Heart left ventricle (tissue), 16 donors: ENCODE measurements at regions of chr18 and their contacts with region 1.

Region 1: DNA sequence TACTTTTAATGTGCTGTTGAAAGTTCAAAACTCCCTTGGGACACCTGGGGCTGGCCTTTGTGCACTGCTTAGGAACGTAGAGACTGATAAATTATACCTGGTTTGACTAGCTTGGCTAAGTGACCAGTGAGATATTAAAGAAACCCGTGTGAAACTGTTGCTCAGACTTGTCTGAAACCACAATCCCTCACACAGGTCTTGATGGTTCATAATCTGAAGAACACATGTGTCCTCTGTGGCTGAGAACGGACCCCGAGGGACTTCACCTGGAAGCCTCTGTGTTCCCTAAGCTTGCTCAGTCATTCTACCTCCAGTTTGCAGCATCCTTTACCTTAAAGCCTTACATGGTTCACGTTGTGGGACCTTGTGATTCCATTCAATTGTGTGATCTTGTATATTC is 218.8 kb downstream of the CBLN2 start:
- DNase-seq: no peak
- ATAC-seq: no peak
- H3K4me3 ChIP-seq: no peak overlapping the region
- H3K27ac ChIP-seq: no peak overlapping the region
- H3K4me1 ChIP-seq: no peaks in the 10 kb centered on the region
- H3K27me3 ChIP-seq: no peaks in the 10 kb centered on the region
- CTCF ChIP-seq: no peak
- POLR2A ChIP-seq: no peak

Region 2: GRCh38 chr18:72107647-72108383 is 217.5 kb before region 1 on chr18:
- intact Hi-C with region 1: no loop called
- DNase-seq: no peak
- ATAC-seq: no peak
- H3K4me3 ChIP-seq: no peak overlapping the region
- H3K27ac ChIP-seq: no peak overlapping the region
- H3K4me1 ChIP-seq: no peaks in the 10 kb centered on the region
- H3K27me3 ChIP-seq: no peaks in the 10 kb centered on the region
- CTCF ChIP-seq: no peak
- POLR2A ChIP-seq: no peak

Region 3: GRCh38 chr18:72261590-72261989 is 63.7 kb before region 1 on chr18:
- intact Hi-C with region 1: loop called in 1 of 10 experiments (anchors 10 kb)
- DNase-seq: no peak
- ATAC-seq: no peak
- H3K4me3 ChIP-seq: no peak overlapping the region
- H3K27ac ChIP-seq: no peak overlapping the region
- H3K4me1 ChIP-seq: no peaks in the 10 kb centered on the region
- H3K27me3 ChIP-seq: no peaks in the 10 kb centered on the region
- CTCF ChIP-seq: no peak
- POLR2A ChIP-seq: no peak

Region 4: GRCh38 chr18:72342933-72343332 is 17.6 kb after region 1 on chr18:
- intact Hi-C with region 1: no loop called
- DNase-seq: no peak
- ATAC-seq: no peak
- H3K4me3 ChIP-seq: no peak overlapping the region
- H3K27ac ChIP-seq: no peak overlapping the region
- H3K4me1 ChIP-seq: no peaks in the 10 kb centered on the region
- H3K27me3 ChIP-seq: no peaks in the 10 kb centered on the region
- CTCF ChIP-seq: no peak
- POLR2A ChIP-seq: no peak

Region 5: DNA sequence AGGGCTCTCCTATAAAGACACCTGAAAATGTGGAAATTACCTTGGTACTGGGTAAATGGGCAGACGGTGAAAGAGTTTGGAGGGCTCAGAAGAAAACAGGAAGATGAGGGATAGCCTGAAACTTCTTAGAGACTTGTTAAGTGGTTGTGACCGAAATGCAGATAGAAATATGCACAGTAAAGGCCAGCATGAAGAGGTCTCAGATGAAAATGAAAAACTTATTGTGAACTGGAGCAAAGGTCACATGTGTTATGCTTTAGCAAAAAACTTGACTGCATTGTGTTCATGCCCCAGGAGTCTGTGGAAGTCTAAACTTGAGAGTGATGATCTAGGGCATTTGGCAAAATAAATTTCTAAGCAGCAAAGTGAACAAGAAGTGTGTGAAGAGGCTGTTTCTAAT is 81.7 kb after region 1 on chr18:
- intact Hi-C with region 1: no loop called
- DNase-seq: no peak
- ATAC-seq: no peak
- H3K4me3 ChIP-seq: no peak overlapping the region
- H3K27ac ChIP-seq: no peak overlapping the region
- H3K4me1 ChIP-seq: no peaks in the 10 kb centered on the region
- H3K27me3 ChIP-seq: no peaks in the 10 kb centered on the region
- CTCF ChIP-seq: no peak
- POLR2A ChIP-seq: no peak

Region 6: GRCh38 chr18:73118121-73118816 is 793.0 kb after region 1 on chr18:
- intact Hi-C with region 1: no loop called
- DNase-seq: no peak
- ATAC-seq: no peak
- H3K4me3 ChIP-seq: no peak overlapping the region
- H3K27ac ChIP-seq: no peak overlapping the region
- H3K4me1 ChIP-seq: no peaks in the 10 kb centered on the region
- H3K27me3 ChIP-seq: no peaks in the 10 kb centered on the region
- CTCF ChIP-seq: no peak
- POLR2A ChIP-seq: no peak